Activated B cell treated with CpG ODN at 0.5 μM for 24 hours (primary cell): ENCODE measurements at regions of chr2 and their contacts with region 1.

Region 1: DNA sequence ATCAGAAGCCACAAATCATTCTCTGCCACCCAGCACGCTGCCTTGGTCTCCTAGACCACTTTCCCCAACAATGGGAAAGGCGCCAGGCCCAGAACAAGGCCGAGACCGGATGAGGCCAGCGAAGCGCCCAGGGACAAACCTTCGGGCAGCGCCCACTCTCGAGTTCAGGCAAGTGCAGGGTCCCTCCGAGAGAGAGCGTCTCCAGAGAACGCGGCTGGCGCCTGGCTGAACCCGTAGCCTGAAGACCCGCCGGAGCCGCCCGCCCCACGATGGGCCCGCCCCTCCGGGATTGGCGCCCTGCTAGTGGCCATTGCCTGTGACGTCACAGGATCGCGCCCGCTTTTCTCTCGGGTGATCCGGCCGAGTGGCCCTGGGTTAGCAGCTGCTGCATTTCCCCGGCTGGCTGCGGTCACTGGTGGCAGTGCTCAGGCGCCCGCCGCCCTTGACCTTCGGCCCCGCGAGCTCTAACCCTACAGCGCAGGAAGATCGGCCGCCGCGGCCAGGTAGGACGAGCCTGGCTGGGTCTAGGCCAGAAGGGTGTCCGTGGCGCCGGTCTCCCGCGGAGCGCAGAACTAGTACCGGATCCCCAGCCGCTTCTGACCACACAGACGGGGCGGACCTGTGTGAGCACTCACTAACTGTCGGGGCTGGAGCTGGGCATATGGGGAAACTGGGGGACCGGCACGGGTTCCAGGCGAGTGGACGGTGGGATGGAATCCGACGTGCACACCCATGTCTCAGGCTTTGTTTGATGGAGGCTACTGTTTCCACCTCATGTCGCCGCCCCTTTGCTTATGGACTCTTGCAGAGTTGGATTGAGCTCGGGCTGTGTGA is at the start of gene FAHD2A:
- DNase-seq: peak; percentile 90
- ATAC-seq: peak; percentile 96
- H3K4me3 Mint-ChIP-seq: peak within 1 kb of the TSS; percentile 99
- H3K27ac Mint-ChIP-seq: peak within 1 kb of the TSS; percentile 88
- H3K4me1 Mint-ChIP-seq: peaks cover 22% of the 10 kb centered on the region
- H3K27me3 Mint-ChIP-seq: no peaks in the 10 kb centered on the region
- CTCF ChIP-seq: no peak
- total RNA-seq, gene FAHD2A: 16.8 and 23.4 TPM in 2 replicates

Region 2: DNA sequence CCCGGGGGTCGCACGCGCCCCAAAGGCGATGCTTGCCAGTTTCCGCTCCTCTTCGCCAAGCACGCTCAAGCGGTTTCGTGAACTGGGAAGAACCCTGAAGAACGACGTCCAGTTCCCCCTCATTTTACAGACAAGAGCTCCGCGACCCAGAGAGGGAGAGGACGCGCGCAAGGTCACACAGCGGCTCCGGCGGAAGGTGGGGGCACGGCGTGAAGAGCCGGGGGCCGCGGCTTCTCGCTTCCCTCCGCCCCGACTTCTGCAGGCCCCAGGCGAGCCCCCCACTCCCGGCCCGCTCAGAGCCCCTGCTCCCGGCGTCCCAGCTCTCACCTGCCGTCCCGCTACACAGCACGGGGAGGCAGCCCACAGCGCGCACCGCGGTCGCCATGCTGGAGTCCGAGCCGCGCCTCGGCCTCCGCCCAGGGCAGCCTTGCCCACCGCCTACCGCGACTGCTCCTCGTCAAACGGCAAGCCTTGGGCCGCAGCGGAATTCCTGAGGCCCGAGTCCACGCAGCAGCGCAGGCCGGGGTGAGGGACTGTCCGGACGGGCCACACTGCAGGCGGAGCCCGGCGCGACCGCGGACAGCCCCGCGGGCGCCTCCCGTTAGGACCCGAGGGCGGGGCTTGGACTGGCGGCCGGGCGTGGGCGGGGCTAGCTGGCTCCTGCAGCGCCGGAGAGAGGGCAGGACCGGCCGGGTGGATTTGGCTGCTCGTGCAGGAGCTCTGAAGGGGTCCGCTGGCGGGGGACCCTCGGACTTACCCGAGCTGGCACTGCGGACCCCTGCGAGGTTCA is 281.0 kb before region 1 on chr2 and contains the start of gene MRPS5:
- CTCF ChIA-PET with region 1: no interaction called
- POLR2A ChIA-PET with region 1: no interaction called
- intact Hi-C with region 1: loop called (anchors 5 kb)
- DNase-seq: peak; percentile 93
- ATAC-seq: peak; percentile 97
- H3K4me3 Mint-ChIP-seq: peak within 1 kb of the TSS; percentile 95
- H3K27ac Mint-ChIP-seq: peak within 1 kb of the TSS; percentile 89
- H3K4me1 Mint-ChIP-seq: peaks cover 44% of the 10 kb centered on the region
- H3K27me3 Mint-ChIP-seq: peaks cover 2% of the 10 kb centered on the region
- CTCF ChIP-seq: no peak
- total RNA-seq, gene MRPS5: 44.4 and 44.9 TPM in 2 replicates

Region 3: DNA sequence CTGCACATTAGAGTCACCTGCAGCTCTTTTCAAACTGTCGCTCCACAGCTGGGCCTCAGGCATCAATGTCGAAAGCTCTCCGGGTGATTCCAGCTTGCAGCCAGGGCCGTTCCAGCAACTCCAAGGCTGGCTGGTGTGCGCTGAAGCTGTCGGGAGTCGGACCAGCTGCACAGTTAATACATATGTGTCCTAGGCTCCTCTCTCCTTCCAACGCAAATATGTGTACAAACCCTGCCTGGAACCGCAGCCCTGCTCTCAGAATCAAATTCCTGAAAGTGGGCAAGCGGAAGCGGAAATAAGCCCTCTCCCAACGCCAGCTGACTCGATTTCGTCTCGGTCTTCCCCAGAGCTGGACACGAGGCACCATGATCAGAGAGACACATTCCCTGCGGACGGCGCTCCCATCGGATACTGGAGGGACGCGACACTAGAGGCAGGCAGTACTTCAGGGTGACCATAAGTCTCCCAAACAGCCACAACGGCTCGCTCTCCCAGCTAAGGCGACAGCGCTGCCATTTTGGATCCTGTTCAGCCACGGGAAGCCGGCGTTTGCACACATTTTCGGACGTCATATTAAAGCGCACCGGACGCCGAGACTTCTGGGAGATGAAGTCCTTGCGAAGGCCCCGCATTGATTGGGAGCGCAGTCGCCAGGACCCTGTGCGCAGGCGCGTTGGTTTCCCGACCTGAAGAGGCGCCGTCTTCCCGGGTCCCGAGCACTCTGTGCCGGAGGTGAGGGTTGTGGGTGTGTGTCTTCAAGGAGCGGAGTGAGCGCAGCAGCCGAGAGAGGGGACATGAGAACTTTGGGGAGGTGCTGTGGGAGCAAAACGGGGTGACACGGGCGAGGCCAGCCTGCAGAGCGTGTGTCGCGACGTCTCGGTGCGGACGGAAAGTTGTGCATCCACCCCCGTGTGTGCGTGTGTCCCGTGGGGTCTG is 237.2 kb before region 1 on chr2 and contains the start of gene ZNF2:
- CTCF ChIA-PET with region 1: no interaction called
- POLR2A ChIA-PET with region 1: interaction called, 4 read pairs
- intact Hi-C with region 1: loop called (anchors 2 kb)
- DNase-seq: peak; percentile 91
- ATAC-seq: peak; percentile 93
- H3K4me3 Mint-ChIP-seq: peak within 1 kb of the TSS; percentile 100
- H3K27ac Mint-ChIP-seq: peak within 1 kb of the TSS; percentile 97
- H3K4me1 Mint-ChIP-seq: peaks cover 27% of the 10 kb centered on the region
- H3K27me3 Mint-ChIP-seq: no peaks in the 10 kb centered on the region
- CTCF ChIP-seq: no peak
- total RNA-seq, gene ZNF2: 4.9 and 5.3 TPM in 2 replicates

Region 4: GRCh38 chr2:95207111-95207961 is 195.3 kb before region 1 on chr2 and contains the start of gene ZNF892:
- CTCF ChIA-PET with region 1: no interaction called
- POLR2A ChIA-PET with region 1: no interaction called
- intact Hi-C with region 1: loop called (anchors 5 kb)
- DNase-seq: peak; percentile 81
- ATAC-seq: peak; percentile 97
- H3K4me3 Mint-ChIP-seq: peak within 1 kb of the TSS; percentile 94
- H3K27ac Mint-ChIP-seq: peak within 1 kb of the TSS; percentile 79
- H3K4me1 Mint-ChIP-seq: peaks cover 16% of the 10 kb centered on the region
- H3K27me3 Mint-ChIP-seq: no peaks in the 10 kb centered on the region
- CTCF ChIP-seq: no peak
- total RNA-seq, gene ZNF892: 4.0 and 4.3 TPM in 2 replicates

Region 5: GRCh38 chr2:95345566-95346230 is 56.9 kb before region 1 on chr2:
- CTCF ChIA-PET with region 1: no interaction called
- POLR2A ChIA-PET with region 1: no interaction called
- intact Hi-C with region 1: loop called (anchors 5 kb)
- DNase-seq: peak; percentile 60
- ATAC-seq: peak; percentile 91
- H3K4me3 Mint-ChIP-seq: peak overlapping the region; percentile 81
- H3K27ac Mint-ChIP-seq: no peak overlapping the region
- H3K4me1 Mint-ChIP-seq: peaks cover 9% of the 10 kb centered on the region
- H3K27me3 Mint-ChIP-seq: peaks cover 39% of the 10 kb centered on the region
- CTCF ChIP-seq: peak; percentile 76

Region 6: DNA sequence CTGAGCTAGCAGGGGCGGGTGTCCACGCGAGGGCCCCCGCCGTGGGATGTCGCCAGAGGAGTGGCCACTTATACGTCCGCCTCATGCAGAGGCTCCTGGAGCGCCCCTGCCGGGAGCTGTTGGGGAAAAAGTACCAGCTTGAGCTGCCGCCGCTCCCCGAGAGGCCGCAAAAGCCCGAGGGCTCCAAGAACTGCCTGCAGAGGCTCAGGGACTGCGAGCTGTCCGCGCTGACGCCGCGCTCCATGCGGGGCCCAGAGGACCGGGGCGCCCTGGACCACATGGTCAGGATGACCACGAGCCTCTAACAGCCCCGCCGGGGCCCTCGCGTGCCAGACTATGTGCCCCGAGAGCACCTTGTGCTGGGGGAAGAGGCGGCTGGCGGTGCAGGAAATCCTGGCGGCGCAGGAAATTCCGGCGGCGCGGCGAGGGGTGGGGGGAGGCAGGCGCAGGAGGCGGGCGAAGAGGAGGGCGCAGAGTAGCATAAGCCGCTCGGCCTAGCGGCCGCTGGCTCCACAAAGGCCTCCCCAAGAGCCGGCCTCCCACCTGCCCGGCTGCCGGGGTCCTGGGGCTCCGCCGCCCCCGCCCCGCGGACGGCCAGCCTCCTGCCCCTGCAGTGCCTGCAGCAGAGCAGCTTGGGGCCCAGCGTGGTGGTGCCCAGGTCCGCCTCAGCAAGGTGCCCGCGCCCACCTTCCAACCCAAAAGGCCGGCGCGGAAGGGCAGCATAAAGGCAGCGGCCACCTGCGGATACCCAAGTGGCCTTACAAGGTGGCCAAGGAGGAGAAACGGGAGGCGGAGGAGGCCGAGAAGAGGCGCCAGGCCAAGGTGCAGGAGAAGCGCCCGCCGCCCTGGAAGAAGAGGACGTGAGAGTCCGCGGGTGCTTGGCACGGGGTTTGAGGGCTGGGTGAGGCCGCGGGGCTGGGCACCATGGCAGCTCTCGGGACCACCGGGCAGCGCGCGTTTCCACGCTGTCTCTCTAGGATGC is 124.1 kb after region 1 on chr2:
- CTCF ChIA-PET with region 1: no interaction called
- POLR2A ChIA-PET with region 1: no interaction called
- intact Hi-C with region 1: loop called (anchors 5 kb)
- DNase-seq: peak; percentile 50
- ATAC-seq: peak; percentile 68
- H3K4me3 Mint-ChIP-seq: peak overlapping the region; percentile 91
- H3K27ac Mint-ChIP-seq: no peak overlapping the region
- H3K4me1 Mint-ChIP-seq: peaks cover 32% of the 10 kb centered on the region
- H3K27me3 Mint-ChIP-seq: no peaks in the 10 kb centered on the region
- CTCF ChIP-seq: no peak

Region 7: GRCh38 chr2:96287273-96287856 is 884.8 kb after region 1 on chr2:
- CTCF ChIA-PET with region 1: no interaction called
- POLR2A ChIA-PET with region 1: no interaction called
- intact Hi-C with region 1: no loop called
- DNase-seq: no peak
- ATAC-seq: no peak
- H3K4me3 Mint-ChIP-seq: no peak overlapping the region
- H3K27ac Mint-ChIP-seq: no peak overlapping the region
- H3K4me1 Mint-ChIP-seq: no peaks in the 10 kb centered on the region
- H3K27me3 Mint-ChIP-seq: no peaks in the 10 kb centered on the region
- CTCF ChIP-seq: no peak